Naive thymus-derived CD4-positive, alpha-beta T cell (primary cell): ENCODE measurements at regions of chr6 and their contacts with region 1.

Region 1: GRCh38 chr6:37018198-37019064 is 13.0 kb downstream of the FGD2 start:
- DNase-seq: peak; percentile 74 to 88 (median 83)
- ATAC-seq: peak; percentile 96
- H3K4me3 ChIP-seq: no peak overlapping the region
- H3K4me3 Mint-ChIP-seq: peak overlapping the region in 3 of 10 donors; percentile 17 to 40 (median 35)
- H3K27ac ChIP-seq: peak overlapping the region; percentile 15
- H3K27ac Mint-ChIP-seq: peak overlapping the region; percentile 65 to 87 (median 80)
- H3K4me1 ChIP-seq: peaks cover 23 to 32% of the 10 kb centered on the region in 2 donors
- H3K4me1 Mint-ChIP-seq: peaks cover 35 to 55% (median 46%) of the 10 kb centered on the region in 7 donors
- H3K27me3 ChIP-seq: no peaks in the 10 kb centered on the region
- H3K27me3 Mint-ChIP-seq: no peaks in the 10 kb centered on the region

Region 2: DNA sequence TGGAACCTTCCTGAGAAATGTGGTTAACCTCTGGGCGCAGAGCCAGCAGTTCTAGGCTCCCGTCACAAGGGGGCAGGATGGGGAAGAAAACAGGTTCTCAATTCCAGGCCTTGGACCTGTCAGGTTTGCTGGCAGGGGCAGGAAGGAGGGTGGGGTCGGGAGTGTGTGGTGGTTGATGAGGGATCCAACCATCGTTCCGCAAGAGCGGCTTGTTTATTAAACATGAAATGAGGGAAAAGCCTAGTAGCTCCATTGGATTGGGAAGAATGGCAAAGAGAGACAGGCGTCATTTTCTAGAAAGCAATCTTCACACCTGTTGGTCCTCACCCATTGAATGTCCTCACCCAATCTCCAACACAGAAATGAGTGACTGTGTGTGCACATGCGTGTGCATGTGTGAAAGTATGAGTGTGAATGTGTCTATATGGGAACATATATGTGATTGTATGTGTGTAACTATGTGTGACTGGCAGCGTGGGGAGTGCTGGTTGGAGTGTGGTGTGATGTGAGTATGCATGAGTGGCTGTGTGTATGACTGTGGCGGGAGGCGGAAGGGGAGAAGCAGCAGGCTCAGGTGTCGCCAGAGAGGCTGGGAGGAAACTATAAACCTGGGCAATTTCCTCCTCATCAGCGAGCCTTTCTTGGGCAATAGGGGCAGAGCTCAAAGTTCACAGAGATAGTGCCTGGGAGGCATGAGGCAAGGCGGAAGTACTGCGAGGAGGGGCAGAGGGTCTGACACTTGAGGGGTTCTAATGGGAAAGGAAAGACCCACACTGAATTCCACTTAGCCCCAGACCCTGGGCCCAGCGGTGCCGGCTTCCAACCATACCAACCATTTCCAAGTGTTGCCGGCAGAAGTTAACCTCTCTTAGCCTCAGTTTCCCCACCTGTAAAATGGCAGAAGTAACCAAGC is 394.6 kb before region 1 on chr6:
- CTCF ChIA-PET with region 1: no interaction called
- POLR2A ChIA-PET with region 1: no interaction called
- intact Hi-C with region 1: loop called in 1 of 2 experiments (anchors 1 kb)
- DNase-seq: peak; percentile 51 to 76 (median 69)
- ATAC-seq: peak; percentile 86
- H3K4me3 ChIP-seq: no peak overlapping the region
- H3K4me3 Mint-ChIP-seq: no peak overlapping the region
- H3K27ac ChIP-seq: no peak overlapping the region
- H3K27ac Mint-ChIP-seq: peak overlapping the region in 4 of 9 donors; percentile 3 to 64 (median 26)
- H3K4me1 ChIP-seq: peaks cover 3 to 6% of the 10 kb centered on the region in 2 donors
- H3K4me1 Mint-ChIP-seq: peaks cover 8 to 36% (median 10%) of the 10 kb centered on the region in 7 donors
- H3K27me3 ChIP-seq: no peaks in the 10 kb centered on the region
- H3K27me3 Mint-ChIP-seq: peaks cover 0 to 3% (median 0%) of the 10 kb centered on the region in 5 donors

Region 3: DNA sequence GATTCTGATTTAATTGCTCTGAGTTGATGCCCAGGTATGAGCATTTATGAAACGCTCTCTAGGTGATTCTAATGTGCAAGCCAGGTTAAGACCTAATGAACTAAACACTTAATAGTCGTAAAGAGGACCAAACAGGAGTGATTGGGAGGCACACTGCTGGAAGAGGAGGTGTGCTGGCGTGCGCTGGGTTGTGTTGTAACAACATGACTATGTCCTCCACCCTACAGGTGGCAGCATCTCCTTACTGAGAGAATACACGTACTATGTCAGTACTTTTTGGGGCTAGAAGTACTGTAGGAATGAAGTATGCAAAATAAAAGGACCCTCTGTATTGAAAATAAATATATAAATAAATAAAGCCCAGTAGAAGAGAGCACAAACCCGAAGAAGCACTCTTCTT is 120.8 kb before region 1 on chr6:
- CTCF ChIA-PET with region 1: interaction called, 6 read pairs
- POLR2A ChIA-PET with region 1: no interaction called
- intact Hi-C with region 1: loop called (anchors 1 kb)
- DNase-seq: peak in 5 of 9 donors; percentile 9 to 37 (median 21)
- ATAC-seq: peak; percentile 59
- H3K4me3 ChIP-seq: no peak overlapping the region
- H3K4me3 Mint-ChIP-seq: no peak overlapping the region
- H3K27ac ChIP-seq: no peak overlapping the region
- H3K27ac Mint-ChIP-seq: peak overlapping the region in 3 of 9 donors; percentile 54 to 76 (median 62)
- H3K4me1 ChIP-seq: no peaks in the 10 kb centered on the region
- H3K4me1 Mint-ChIP-seq: peaks cover 0 to 29% (median 10%) of the 10 kb centered on the region in 7 donors
- H3K27me3 ChIP-seq: no peaks in the 10 kb centered on the region
- H3K27me3 Mint-ChIP-seq: no peaks in the 10 kb centered on the region

Region 4: DNA sequence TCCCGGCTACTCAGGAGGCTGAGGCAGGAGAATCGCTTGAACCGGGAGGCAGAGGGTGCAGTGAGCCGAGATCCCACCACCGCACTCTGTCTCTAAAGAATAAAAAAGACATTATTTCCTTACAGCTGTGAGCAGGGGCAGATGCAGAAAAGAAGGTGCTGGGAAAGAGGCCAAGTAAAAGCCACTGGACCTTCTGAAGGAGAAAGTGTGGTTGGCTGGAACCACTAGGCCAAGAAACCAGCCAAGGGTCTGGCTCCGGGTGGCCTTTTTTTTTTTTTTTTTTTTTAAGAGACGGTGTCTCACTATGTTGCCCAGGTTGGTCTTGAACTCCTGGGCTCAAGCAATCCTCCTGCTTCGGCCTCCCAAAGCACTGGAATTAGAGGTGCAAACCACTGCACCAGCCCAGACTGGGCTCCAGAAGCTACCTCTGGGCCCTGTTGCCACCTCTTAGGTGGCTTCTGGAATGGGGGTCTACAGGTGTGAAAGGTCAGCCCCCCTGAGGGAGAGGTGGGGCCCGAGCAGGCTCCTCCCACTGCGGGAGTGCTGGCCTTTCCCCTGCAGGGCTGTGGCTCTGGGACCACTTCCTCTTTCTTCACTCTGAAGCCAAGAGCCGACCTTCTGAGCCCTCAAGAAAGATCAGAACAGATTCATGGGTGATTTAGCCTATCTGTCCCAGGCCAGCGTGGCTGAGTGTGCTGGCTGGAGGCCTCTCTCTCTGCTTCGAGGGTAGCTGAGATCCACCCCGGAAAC is 13.2 kb before region 1 on chr6 and contains the start of gene FGD2:
- CTCF ChIA-PET with region 1: interaction called, 17 read pairs
- POLR2A ChIA-PET with region 1: no interaction called
- intact Hi-C with region 1: no loop called
- DNase-seq: no peak
- ATAC-seq: peak; percentile 61
- H3K4me3 ChIP-seq: peak within 1 kb of the TSS; percentile 4
- H3K4me3 Mint-ChIP-seq: peak within 1 kb of the TSS in 8 of 10 donors; percentile 2 to 50 (median 36)
- H3K27ac ChIP-seq: no peak within 1 kb of the TSS
- H3K27ac Mint-ChIP-seq: peak within 1 kb of the TSS in 6 of 9 donors; percentile 22 to 71 (median 42)
- H3K4me1 ChIP-seq: peaks cover 4 to 12% of the 10 kb centered on the region in 2 donors
- H3K4me1 Mint-ChIP-seq: peaks cover 7 to 19% (median 10%) of the 10 kb centered on the region in 7 donors
- H3K27me3 ChIP-seq: no peaks in the 10 kb centered on the region
- H3K27me3 Mint-ChIP-seq: peaks cover 0 to 3% (median 0%) of the 10 kb centered on the region in 5 donors
- total RNA-seq, gene FGD2: 1.4 to 71.9 (median 3.5) TPM

Region 5: GRCh38 chr6:37102279-37103168 is 84.1 kb after region 1 on chr6:
- CTCF ChIA-PET with region 1: interaction called, 3 read pairs
- POLR2A ChIA-PET with region 1: no interaction called
- intact Hi-C with region 1: loop called in 1 of 2 experiments (anchors 5 kb)
- DNase-seq: peak; percentile 59 to 79 (median 75)
- ATAC-seq: peak; percentile 92
- H3K4me3 ChIP-seq: peak overlapping the region; percentile 47
- H3K4me3 Mint-ChIP-seq: peak overlapping the region; percentile 74 to 86 (median 80)
- H3K27ac ChIP-seq: peak overlapping the region; percentile 46
- H3K27ac Mint-ChIP-seq: peak overlapping the region; percentile 48 to 92 (median 87)
- H3K4me1 ChIP-seq: peaks cover 14 to 19% of the 10 kb centered on the region in 2 donors
- H3K4me1 Mint-ChIP-seq: peaks cover 16 to 55% (median 32%) of the 10 kb centered on the region in 7 donors
- H3K27me3 ChIP-seq: no peaks in the 10 kb centered on the region
- H3K27me3 Mint-ChIP-seq: no peaks in the 10 kb centered on the region

Region 6: DNA sequence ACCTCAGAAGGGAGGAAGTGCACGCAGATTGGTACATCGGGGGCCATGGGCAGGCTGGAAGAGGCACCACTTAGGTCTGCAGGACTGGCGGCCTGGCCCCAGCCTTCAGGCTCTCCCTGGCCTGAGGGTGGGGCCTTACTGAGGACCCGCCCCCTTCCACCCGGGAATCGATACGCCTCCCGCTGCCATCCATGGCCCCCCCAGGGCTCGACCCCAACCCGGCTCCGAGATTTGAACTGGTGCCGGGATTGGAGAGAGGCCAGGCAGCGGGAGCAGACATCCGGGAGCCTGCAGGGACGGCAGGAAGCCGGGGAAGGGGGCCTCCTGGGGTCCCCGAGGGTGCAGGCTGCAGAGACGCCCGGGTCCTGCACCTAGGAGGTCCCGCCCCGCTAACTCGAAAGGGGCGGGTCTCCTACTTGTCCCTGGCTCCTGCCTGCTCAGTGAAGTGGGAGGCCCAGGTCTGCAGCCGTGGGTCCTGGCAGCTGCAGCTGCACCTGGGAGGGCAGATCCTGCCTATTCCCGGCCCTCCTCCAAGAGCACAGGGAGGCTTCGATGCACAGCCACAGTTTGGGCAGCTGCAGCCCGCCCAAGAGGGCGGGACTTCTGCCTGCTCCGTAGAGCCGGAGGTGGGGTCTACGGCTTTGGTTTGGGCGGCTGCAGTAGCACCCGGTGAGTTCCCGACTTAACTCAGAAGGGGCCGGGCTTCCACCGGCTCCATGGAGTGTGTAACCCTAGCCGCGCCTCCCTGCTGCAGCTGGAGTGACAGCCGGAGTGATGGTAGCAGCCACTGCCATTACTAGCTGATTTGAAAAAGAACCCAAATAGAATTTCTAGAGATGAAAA is 203.9 kb after region 1 on chr6:
- CTCF ChIA-PET with region 1: interaction called, 23 read pairs
- POLR2A ChIA-PET with region 1: no interaction called
- intact Hi-C with region 1: no loop called
- DNase-seq: peak; percentile 45 to 74 (median 66)
- ATAC-seq: peak; percentile 94
- H3K4me3 ChIP-seq: peak overlapping the region; percentile 60
- H3K4me3 Mint-ChIP-seq: peak overlapping the region; percentile 77 to 91 (median 86)
- H3K27ac ChIP-seq: peak overlapping the region; percentile 47
- H3K27ac Mint-ChIP-seq: peak overlapping the region in 7 of 9 donors; percentile 13 to 76 (median 68)
- H3K4me1 ChIP-seq: peaks cover 4% of the 10 kb centered on the region in 2 donors
- H3K4me1 Mint-ChIP-seq: peaks cover 12 to 38% (median 13%) of the 10 kb centered on the region in 7 donors
- H3K27me3 ChIP-seq: no peaks in the 10 kb centered on the region
- H3K27me3 Mint-ChIP-seq: no peaks in the 10 kb centered on the region

Region 7: GRCh38 chr6:37791156-37791919 is 772.9 kb after region 1 on chr6:
- CTCF ChIA-PET with region 1: no interaction called
- POLR2A ChIA-PET with region 1: no interaction called
- intact Hi-C with region 1: no loop called
- DNase-seq: peak; percentile 29 to 83 (median 59)
- ATAC-seq: peak; percentile 99
- H3K4me3 ChIP-seq: no peak overlapping the region
- H3K4me3 Mint-ChIP-seq: no peak overlapping the region
- H3K27ac ChIP-seq: no peak overlapping the region
- H3K27ac Mint-ChIP-seq: no peak overlapping the region
- H3K4me1 ChIP-seq: no peaks in the 10 kb centered on the region
- H3K4me1 Mint-ChIP-seq: peaks cover 0 to 11% (median 0%) of the 10 kb centered on the region in 7 donors
- H3K27me3 ChIP-seq: no peaks in the 10 kb centered on the region
- H3K27me3 Mint-ChIP-seq: peaks cover 0 to 10% (median 0%) of the 10 kb centered on the region in 5 donors